Kidney (tissue), 22 donors: ENCODE measurements at regions of chr12 and their contacts with region 1.

Region 1: DNA sequence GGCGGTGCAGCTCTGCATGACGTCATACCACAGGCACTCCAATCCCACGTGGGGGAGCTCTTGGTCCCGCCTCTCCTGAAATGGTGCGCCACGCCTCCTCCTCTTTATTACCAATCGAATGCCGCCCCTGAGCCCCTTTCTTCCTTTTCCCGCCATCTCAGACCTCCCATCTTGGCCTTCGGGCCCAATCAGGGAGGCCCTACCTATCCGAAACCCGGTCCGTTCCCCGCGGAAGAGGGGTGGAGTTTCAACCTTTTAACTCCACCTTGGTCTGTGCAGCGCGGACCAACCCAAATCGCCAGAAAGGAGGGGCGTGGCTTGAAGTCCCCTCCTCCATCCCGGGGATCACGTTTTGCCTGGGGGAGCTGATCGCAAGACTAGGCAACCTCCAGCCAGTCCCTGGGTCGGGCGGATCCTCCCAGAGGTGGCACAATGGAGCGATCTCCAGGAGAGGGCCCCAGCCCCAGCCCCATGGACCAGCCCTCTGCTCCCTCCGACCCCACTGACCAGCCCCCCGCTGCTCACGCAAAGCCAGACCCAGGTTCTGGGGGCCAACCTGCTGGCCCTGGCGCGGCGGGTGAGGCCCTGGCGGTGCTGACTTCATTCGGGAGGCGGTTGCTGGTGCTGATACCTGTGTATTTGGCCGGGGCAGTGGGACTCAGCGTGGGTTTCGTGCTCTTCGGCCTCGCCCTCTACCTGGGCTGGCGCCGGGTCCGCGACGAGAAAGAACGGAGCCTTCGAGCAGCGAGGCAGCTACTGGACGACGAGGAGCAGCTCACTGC is at the start of gene ESYT1:
- DNase-seq: peak; percentile 99 to 100 (median 100)
- H3K4me3 ChIP-seq: peak within 1 kb of the TSS; percentile 80 to 83 (median 82)
- H3K27ac ChIP-seq: peak within 1 kb of the TSS; percentile 88 to 90
- H3K4me1 ChIP-seq: peaks cover 11 to 25% (median 12%) of the 10 kb centered on the region in 3 donors
- H3K27me3 ChIP-seq: no peaks in the 10 kb centered on the region
- CTCF ChIP-seq: no peak
- total RNA-seq, gene ESYT1: 104 TPM

Region 2: DNA sequence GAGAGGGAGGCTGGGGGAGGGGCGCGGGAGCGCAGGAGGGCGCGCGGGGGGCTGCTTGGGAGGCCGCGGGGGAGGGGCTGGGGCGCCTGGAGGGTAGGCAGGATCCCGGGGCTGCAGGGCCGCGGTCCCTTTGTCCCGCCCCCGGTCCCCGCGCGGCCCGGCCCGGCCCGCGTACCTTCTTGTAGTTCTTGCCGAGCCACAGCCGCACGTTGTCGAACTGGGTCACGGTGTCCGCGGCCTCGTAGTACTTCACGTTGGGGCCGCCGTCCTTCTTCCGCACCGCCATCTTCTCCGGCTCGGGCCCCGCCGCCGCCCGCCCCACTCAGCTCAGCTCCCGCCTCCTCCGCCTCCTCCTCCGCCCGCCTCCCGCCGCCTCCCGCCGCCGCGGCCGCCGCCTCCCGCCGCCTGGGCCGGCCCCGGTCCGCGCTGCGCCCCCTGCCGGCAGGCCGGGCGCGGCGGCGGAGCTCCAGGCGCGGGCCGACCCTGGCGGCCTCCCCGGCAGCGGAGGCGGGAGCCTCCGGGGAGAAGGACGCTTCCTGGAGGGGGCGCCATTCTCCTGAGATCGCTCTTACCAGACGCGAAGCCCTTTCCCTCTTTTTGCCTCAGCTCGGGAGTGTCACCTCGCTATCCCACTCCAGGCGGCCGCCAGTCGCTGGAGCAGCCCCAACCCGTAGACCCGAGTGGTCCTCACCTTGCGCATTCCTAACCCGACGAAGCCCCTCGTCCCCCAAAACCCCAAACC is 61.3 kb after region 1 on chr12 and contains the start of gene SMARCC2:
- intact Hi-C with region 1: loop called (anchors 10 kb)
- DNase-seq: peak; percentile 91 to 95 (median 94)
- H3K4me3 ChIP-seq: peak within 1 kb of the TSS; percentile 78 to 95 (median 95)
- H3K27ac ChIP-seq: peak within 1 kb of the TSS; percentile 93 to 99
- H3K4me1 ChIP-seq: peaks cover 0 to 19% (median 10%) of the 10 kb centered on the region in 3 donors
- H3K27me3 ChIP-seq: no peaks in the 10 kb centered on the region
- CTCF ChIP-seq: peak; percentile 83
- total RNA-seq, gene SMARCC2: 112 TPM